Activated CD4-positive, alpha-beta T cell treated with anti-CD3 and anti-CD28 coated beads, Interleukin-2, amount 10 ng/mL, durations not matched to agents 7 days and 5 days (primary cell): ENCODE measurements at regions of chr6 and their contacts with region 1.

Region 1: GRCh38 chr6:31441365-31442267 is 38.2 kb downstream of the MICA start:
- DNase-seq: peak; percentile 80
- H3K4me3 Mint-ChIP-seq: no peak overlapping the region
- H3K27ac Mint-ChIP-seq: no peak overlapping the region
- H3K4me1 Mint-ChIP-seq: peaks cover 4% of the 10 kb centered on the region
- H3K27me3 Mint-ChIP-seq: peaks cover 65% of the 10 kb centered on the region

Region 2: GRCh38 chr6:31399589-31400466 is 41.8 kb before region 1 on chr6:
- CTCF ChIA-PET with region 1: interaction called, 18 read pairs
- POLR2A ChIA-PET with region 1: no interaction called
- DNase-seq: peak; percentile 62
- H3K4me3 Mint-ChIP-seq: peak overlapping the region; percentile 91
- H3K27ac Mint-ChIP-seq: peak overlapping the region; percentile 91
- H3K4me1 Mint-ChIP-seq: peaks cover 54% of the 10 kb centered on the region
- H3K27me3 Mint-ChIP-seq: peaks cover 3% of the 10 kb centered on the region

Region 3: GRCh38 chr6:31664790-31665500 is 223.3 kb after region 1 on chr6 and contains the start of gene GPANK1:
- CTCF ChIA-PET with region 1: no interaction called
- POLR2A ChIA-PET with region 1: no interaction called
- DNase-seq: peak; percentile 95
- H3K4me3 Mint-ChIP-seq: peak within 1 kb of the TSS; percentile 87
- H3K27ac Mint-ChIP-seq: peak within 1 kb of the TSS; percentile 94
- H3K4me1 Mint-ChIP-seq: peaks cover 67% of the 10 kb centered on the region
- H3K27me3 Mint-ChIP-seq: no peaks in the 10 kb centered on the region
- total RNA-seq, gene GPANK1: 34.4 to 42.9 TPM